ENCODE measurements at regions of chr3 and their contacts with region 1.

Region 1: DNA sequence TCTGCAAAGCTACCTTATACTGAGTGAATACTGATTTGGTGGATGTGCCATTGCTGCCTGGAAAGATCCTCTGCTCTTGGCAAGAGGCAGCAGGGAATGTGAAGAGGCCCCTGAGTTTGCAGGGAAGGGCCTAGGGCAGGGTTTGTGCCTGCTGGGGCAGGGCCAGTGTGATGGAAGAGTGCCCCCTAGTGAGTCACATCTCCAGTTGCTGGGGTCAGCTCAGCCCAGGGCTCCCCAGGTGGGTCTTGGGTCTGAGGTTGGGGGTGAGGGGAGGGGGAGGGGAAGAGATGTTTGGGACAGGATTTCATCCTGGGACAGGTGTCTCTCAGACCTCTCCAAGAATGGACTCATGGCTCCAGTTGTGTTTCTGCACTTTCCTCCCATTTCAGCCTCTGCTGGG is 4.1 kb upstream of the AMOTL2 start:
- DNase-seq: peak in 2 of 5 donors; percentile 15 to 17
- H3K4me3 ChIP-seq: no peak overlapping the region
- H3K4me3 Mint-ChIP-seq: no peak overlapping the region
- H3K27ac ChIP-seq: no peak overlapping the region
- H3K27ac Mint-ChIP-seq: no peak overlapping the region
- H3K4me1 ChIP-seq: peaks cover 10% of the 10 kb centered on the region
- H3K4me1 Mint-ChIP-seq: peaks cover 11 to 16% (median 12%) of the 10 kb centered on the region in 3 donors
- H3K27me3 ChIP-seq: peaks cover 25% of the 10 kb centered on the region
- H3K27me3 Mint-ChIP-seq: peaks cover 24 to 41% of the 10 kb centered on the region in 2 donors

Region 2: DNA sequence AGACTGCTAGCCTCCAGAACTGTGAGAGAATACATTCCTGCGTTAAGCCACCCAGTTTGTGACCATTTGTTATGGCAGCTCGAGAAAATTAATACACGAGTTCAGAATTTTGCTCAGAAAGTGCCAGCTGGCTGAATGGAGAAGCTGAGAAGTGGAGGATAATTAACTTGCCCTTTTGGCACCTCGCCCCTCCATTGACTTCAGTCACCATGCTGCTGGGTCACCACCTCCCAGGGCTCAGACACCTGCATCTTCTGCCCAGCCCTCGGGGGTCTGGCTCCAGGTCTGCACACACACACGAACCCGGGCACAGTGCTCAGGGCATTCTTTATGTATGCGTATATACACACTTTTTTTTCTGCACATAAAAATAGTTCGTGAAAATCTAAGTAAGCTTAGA is 36.1 kb before region 1 on chr3:
- CTCF ChIA-PET with region 1: no interaction called
- POLR2A ChIA-PET with region 1: interaction called, 10 read pairs
- DNase-seq: no peak
- H3K4me3 ChIP-seq: no peak overlapping the region
- H3K4me3 Mint-ChIP-seq: no peak overlapping the region
- H3K27ac ChIP-seq: no peak overlapping the region
- H3K27ac Mint-ChIP-seq: no peak overlapping the region
- H3K4me1 ChIP-seq: no peaks in the 10 kb centered on the region
- H3K4me1 Mint-ChIP-seq: no peaks in the 10 kb centered on the region
- H3K27me3 ChIP-seq: no peaks in the 10 kb centered on the region
- H3K27me3 Mint-ChIP-seq: peaks cover 2 to 18% of the 10 kb centered on the region in 2 donors

Region 3: GRCh38 chr3:134404366-134404885 is 26.0 kb after region 1 on chr3:
- CTCF ChIA-PET with region 1: no interaction called
- POLR2A ChIA-PET with region 1: no interaction called
- DNase-seq: no peak
- H3K4me3 ChIP-seq: no peak overlapping the region
- H3K4me3 Mint-ChIP-seq: no peak overlapping the region
- H3K27ac ChIP-seq: no peak overlapping the region
- H3K27ac Mint-ChIP-seq: no peak overlapping the region
- H3K4me1 ChIP-seq: no peaks in the 10 kb centered on the region
- H3K4me1 Mint-ChIP-seq: peaks cover 3 to 5% (median 4%) of the 10 kb centered on the region in 3 donors
- H3K27me3 ChIP-seq: peaks cover 16% of the 10 kb centered on the region
- H3K27me3 Mint-ChIP-seq: peaks cover 37 to 77% of the 10 kb centered on the region in 2 donors